WTC11 (cell line): ENCODE measurements at regions of chr21 and their contacts with region 1.

Region 1: GRCh38 chr21:29002442-29003144 is 9.9 kb upstream of the LTN1 start:
- DNase-seq: peak; percentile 88
- ATAC-seq: peak; percentile 99
- H3K4me3 Mint-ChIP-seq: peak overlapping the region; percentile 81
- H3K27ac Mint-ChIP-seq: peak overlapping the region; percentile 98
- H3K4me1 Mint-ChIP-seq: no peaks in the 10 kb centered on the region; the same call in 1 of the 2 replicates
- H3K27me3 Mint-ChIP-seq: peaks cover 8% of the 10 kb centered on the region; the same call in 1 of the 2 replicates
- CTCF ChIP-seq: no peak

Region 2: GRCh38 chr21:28982637-28983036 is 20.0 kb before region 1 on chr21:
- CTCF ChIA-PET with region 1: no interaction called
- POLR2A ChIA-PET with region 1: no interaction called
- DNase-seq: no peak
- ATAC-seq: no peak
- H3K4me3 Mint-ChIP-seq: no peak overlapping the region
- H3K27ac Mint-ChIP-seq: no peak overlapping the region
- H3K4me1 Mint-ChIP-seq: no peaks in the 10 kb centered on the region
- H3K27me3 Mint-ChIP-seq: no peaks in the 10 kb centered on the region
- CTCF ChIP-seq: no peak

Region 3: GRCh38 chr21:29018540-29018939 is 15.9 kb after region 1 on chr21:
- CTCF ChIA-PET with region 1: no interaction called
- POLR2A ChIA-PET with region 1: interaction called, 22 read pairs
- DNase-seq: no peak
- ATAC-seq: peak; percentile 16
- H3K4me3 Mint-ChIP-seq: peak overlapping the region; percentile 89
- H3K27ac Mint-ChIP-seq: peak overlapping the region; percentile 82
- H3K4me1 Mint-ChIP-seq: peaks cover 13% of the 10 kb centered on the region
- H3K27me3 Mint-ChIP-seq: no peaks in the 10 kb centered on the region
- CTCF ChIP-seq: no peak